Activated CD8-positive, alpha-beta T cell treated with anti-CD3 and anti-CD28 coated beads for 36 hours (primary cell): ENCODE measurements at regions of chr5 and their contacts with region 1.

Region 1: DNA sequence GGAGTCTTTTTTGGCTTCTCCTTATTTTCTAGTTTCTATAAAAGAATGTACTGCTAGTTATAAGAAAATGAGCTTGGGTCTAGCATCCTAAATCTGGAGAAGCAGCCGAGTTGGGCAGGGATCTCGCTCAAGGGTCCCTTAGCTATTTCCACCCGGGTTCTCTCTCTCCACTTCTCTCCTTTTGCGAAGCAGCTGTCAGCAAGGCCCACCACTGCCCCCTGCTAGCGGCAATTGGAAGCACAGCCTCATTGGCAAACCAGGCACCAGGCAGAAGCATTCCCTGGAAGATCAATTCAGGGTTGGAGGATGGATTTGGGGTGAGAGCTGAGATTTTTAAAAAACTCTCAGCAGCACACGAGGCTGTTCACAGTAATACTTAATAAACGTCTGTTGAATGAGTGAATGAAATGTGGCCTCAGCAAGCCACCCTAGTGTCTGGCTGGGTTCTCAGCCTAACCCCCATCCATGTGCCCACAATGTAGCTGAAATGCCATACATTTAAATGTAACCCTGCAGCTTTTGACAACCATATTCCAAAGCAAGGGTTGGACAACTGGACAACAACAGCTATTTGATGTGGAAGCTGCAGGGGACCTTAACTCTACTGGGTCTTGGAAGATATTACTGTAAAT is 34.6 kb upstream of the TNIP1 start:
- DNase-seq: peak; percentile 81
- ATAC-seq: peak; percentile 93
- H3K4me3 Mint-ChIP-seq: no peak overlapping the region
- H3K27ac Mint-ChIP-seq: no peak overlapping the region
- H3K4me1 Mint-ChIP-seq: peaks cover 6% of the 10 kb centered on the region
- H3K27me3 Mint-ChIP-seq: no peaks in the 10 kb centered on the region
- CTCF ChIP-seq: peak; percentile 97

Region 2: GRCh38 chr5:151051066-151051930 is 64.1 kb before region 1 on chr5:
- CTCF ChIA-PET with region 1: interaction called, 478 read pairs
- POLR2A ChIA-PET with region 1: interaction called, 9 read pairs
- intact Hi-C with region 1: loop called (anchors 1 kb)
- DNase-seq: peak; percentile 88
- ATAC-seq: peak; percentile 83
- H3K4me3 Mint-ChIP-seq: no peak overlapping the region
- H3K27ac Mint-ChIP-seq: peak overlapping the region; percentile 36
- H3K4me1 Mint-ChIP-seq: peaks cover 12% of the 10 kb centered on the region
- H3K27me3 Mint-ChIP-seq: no peaks in the 10 kb centered on the region
- CTCF ChIP-seq: peak; percentile 75

Region 3: DNA sequence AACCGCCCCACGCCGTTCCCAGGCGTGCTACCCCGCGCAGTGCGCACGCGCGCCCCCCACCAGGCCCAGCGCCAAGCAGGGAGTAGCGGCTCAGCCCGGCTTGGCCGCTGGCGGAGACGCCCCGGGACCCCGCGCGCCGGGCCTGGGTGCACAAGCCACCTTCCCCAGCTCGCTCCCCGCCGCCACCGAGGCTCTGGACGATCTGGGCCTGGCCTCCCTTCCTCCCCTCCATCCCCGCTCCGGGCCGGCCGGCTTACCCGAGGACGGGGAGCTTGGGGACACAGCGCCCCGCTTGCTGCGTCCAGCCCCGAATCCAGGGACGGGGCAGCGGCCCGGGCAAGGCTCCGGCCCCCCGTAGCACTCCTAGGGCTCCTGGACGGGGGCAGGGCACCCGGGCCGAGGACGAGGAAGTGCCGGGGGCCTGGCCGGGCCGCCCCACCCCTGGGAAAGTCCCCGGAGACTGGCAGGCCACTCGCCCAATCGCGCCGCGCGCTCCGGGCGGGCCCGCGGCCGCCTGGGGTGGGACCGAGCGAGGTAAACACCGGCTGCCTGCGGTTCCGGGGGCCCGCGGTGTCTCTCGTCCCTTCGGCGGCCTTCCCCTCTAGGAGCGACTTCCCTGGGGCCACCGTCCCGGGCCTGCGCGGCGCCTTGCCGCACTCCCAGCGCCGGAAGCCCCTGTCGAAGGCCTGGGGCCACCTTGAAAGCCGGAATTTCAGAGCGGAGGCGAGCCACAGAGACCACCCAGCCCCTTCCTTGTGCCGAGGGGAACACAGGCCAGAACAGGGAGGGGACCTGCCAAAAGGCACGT is 34.6 kb before region 1 on chr5 and contains the start of gene TNIP1:
- CTCF ChIA-PET with region 1: interaction called, 65 read pairs
- POLR2A ChIA-PET with region 1: interaction called, 3 read pairs
- intact Hi-C with region 1: no loop called
- DNase-seq: peak; percentile 94
- ATAC-seq: peak; percentile 79
- H3K4me3 Mint-ChIP-seq: peak within 1 kb of the TSS; percentile 85
- H3K27ac Mint-ChIP-seq: peak within 1 kb of the TSS; percentile 96
- H3K4me1 Mint-ChIP-seq: peaks cover 77% of the 10 kb centered on the region
- H3K27me3 Mint-ChIP-seq: no peaks in the 10 kb centered on the region
- CTCF ChIP-seq: no peak
- total RNA-seq, gene TNIP1: 222 TPM

Region 4: GRCh38 chr5:151126199-151126645 is 10.8 kb after region 1 on chr5:
- CTCF ChIA-PET with region 1: interaction called, 98 read pairs
- POLR2A ChIA-PET with region 1: interaction called, 6 read pairs
- intact Hi-C with region 1: no loop called
- DNase-seq: peak; percentile 79
- ATAC-seq: peak; percentile 27
- H3K4me3 Mint-ChIP-seq: peak overlapping the region; percentile 18
- H3K27ac Mint-ChIP-seq: peak overlapping the region; percentile 96
- H3K4me1 Mint-ChIP-seq: peaks cover 73% of the 10 kb centered on the region
- H3K27me3 Mint-ChIP-seq: no peaks in the 10 kb centered on the region
- CTCF ChIP-seq: peak; percentile 90

Region 5: GRCh38 chr5:151157426-151158286 is 42.3 kb after region 1 on chr5 and contains the start of gene ANXA6:
- CTCF ChIA-PET with region 1: interaction called, 171 read pairs
- POLR2A ChIA-PET with region 1: interaction called, 3 read pairs
- intact Hi-C with region 1: no loop called
- DNase-seq: peak; percentile 76
- ATAC-seq: peak; percentile 53
- H3K4me3 Mint-ChIP-seq: peak within 1 kb of the TSS; percentile 95
- H3K27ac Mint-ChIP-seq: peak within 1 kb of the TSS; percentile 89
- H3K4me1 Mint-ChIP-seq: peaks cover 40% of the 10 kb centered on the region
- H3K27me3 Mint-ChIP-seq: no peaks in the 10 kb centered on the region
- CTCF ChIP-seq: no peak
- total RNA-seq, gene ANXA6: 328 to 336 TPM

Region 6: DNA sequence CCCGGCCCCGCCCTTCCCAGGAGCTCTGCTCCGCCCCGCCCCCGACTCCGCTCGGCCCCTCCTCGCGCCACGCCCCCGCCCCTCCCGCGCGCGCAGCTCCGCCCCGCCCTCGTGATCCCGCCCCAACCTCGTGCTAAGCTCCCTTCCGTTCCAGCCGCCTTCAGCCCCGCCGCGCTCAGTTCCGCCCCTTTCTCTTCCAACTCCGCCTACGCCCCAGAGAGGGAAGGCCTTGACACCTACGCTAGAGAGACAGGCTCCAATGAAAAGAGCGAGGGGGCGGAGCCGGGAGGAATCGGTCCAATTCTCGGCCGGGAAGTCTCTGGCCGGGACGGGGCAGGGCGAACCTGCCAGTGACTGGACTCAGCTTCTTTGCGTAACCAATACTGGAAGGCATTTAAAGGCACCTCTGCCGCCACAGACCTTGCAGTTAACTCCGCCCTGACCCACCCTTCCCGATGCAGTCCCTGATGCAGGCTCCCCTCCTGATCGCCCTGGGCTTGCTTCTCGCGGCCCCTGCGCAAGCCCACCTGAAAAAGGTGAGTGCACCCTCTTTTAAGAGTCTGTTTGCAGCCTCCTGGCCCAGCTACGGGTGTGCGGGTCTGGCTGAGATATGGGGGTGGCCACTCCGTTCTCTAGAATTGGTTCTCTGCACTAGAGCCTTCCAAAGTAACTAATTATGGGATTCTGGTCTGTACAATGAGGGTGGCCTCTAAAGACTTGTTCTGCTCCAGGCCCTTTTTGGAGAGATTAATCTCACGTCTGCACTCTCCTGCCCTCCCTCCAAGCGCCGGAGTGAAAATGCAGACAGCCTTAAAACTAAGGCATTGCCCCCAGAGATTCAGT is 137.6 kb after region 1 on chr5 and contains the start of gene GM2A:
- CTCF ChIA-PET with region 1: interaction called, 11 read pairs
- POLR2A ChIA-PET with region 1: no interaction called
- intact Hi-C with region 1: no loop called
- DNase-seq: peak; percentile 100
- ATAC-seq: peak; percentile 92
- H3K4me3 Mint-ChIP-seq: peak within 1 kb of the TSS; percentile 90
- H3K27ac Mint-ChIP-seq: peak within 1 kb of the TSS; percentile 95
- H3K4me1 Mint-ChIP-seq: peaks cover 39% of the 10 kb centered on the region
- H3K27me3 Mint-ChIP-seq: no peaks in the 10 kb centered on the region
- CTCF ChIP-seq: no peak
- total RNA-seq, gene GM2A: 13.3 to 13.7 TPM

Region 7: GRCh38 chr5:151270599-151270998 is 155.2 kb after region 1 on chr5:
- CTCF ChIA-PET with region 1: no interaction called
- POLR2A ChIA-PET with region 1: no interaction called
- intact Hi-C with region 1: no loop called
- DNase-seq: no peak
- ATAC-seq: peak; percentile 92
- H3K4me3 Mint-ChIP-seq: no peak overlapping the region
- H3K27ac Mint-ChIP-seq: no peak overlapping the region
- H3K4me1 Mint-ChIP-seq: peaks cover 1% of the 10 kb centered on the region
- H3K27me3 Mint-ChIP-seq: no peaks in the 10 kb centered on the region
- CTCF ChIP-seq: no peak

Region 8: GRCh38 chr5:151480384-151481293 is 365.2 kb after region 1 on chr5:
- CTCF ChIA-PET with region 1: no interaction called
- POLR2A ChIA-PET with region 1: no interaction called
- intact Hi-C with region 1: no loop called
- DNase-seq: no peak
- ATAC-seq: no peak
- H3K4me3 Mint-ChIP-seq: no peak overlapping the region
- H3K27ac Mint-ChIP-seq: no peak overlapping the region
- H3K4me1 Mint-ChIP-seq: no peaks in the 10 kb centered on the region
- H3K27me3 Mint-ChIP-seq: no peaks in the 10 kb centered on the region
- CTCF ChIP-seq: no peak